CD4-positive, alpha-beta T cell (primary cell): ENCODE measurements at regions of chr2 and their contacts with region 1.

Region 1: GRCh38 chr2:65056215-65057053 is at the start of gene CEP68:
- DNase-seq: peak; percentile 90 to 98 (median 94)
- ATAC-seq: peak; percentile 89
- H3K4me3 ChIP-seq: peak within 1 kb of the TSS; percentile 87
- H3K4me3 Mint-ChIP-seq: peak within 1 kb of the TSS; percentile 98
- H3K27ac ChIP-seq: peak within 1 kb of the TSS; percentile 45 to 66
- H3K27ac Mint-ChIP-seq: peak within 1 kb of the TSS; percentile 96
- H3K4me1 ChIP-seq: peaks cover 66% of the 10 kb centered on the region
- H3K4me1 Mint-ChIP-seq: peaks cover 69% of the 10 kb centered on the region
- H3K27me3 ChIP-seq: no peaks in the 10 kb centered on the region
- H3K27me3 Mint-ChIP-seq: no peaks in the 10 kb centered on the region
- CTCF ChIP-seq: no peak
- total RNA-seq, gene CEP68: 19.4 to 20.1 TPM

Region 2: GRCh38 chr2:64750817-64751285 is 305.6 kb before region 1 on chr2:
- CTCF ChIA-PET with region 1: no interaction called
- POLR2A ChIA-PET with region 1: interaction called, 15 read pairs
- intact Hi-C with region 1: loop called in 1 of 2 experiments (anchors 5 kb)
- DNase-seq: peak; percentile 92 to 100 (median 96)
- ATAC-seq: peak; percentile 83
- H3K4me3 ChIP-seq: peak overlapping the region; percentile 96
- H3K4me3 Mint-ChIP-seq: peak overlapping the region; percentile 95
- H3K27ac ChIP-seq: peak overlapping the region; percentile 81 to 91
- H3K27ac Mint-ChIP-seq: peak overlapping the region; percentile 92
- H3K4me1 ChIP-seq: peaks cover 16% of the 10 kb centered on the region
- H3K4me1 Mint-ChIP-seq: peaks cover 34% of the 10 kb centered on the region
- H3K27me3 ChIP-seq: no peaks in the 10 kb centered on the region
- H3K27me3 Mint-ChIP-seq: no peaks in the 10 kb centered on the region
- CTCF ChIP-seq: no peak

Region 3: GRCh38 chr2:64988420-64989125 is 67.9 kb before region 1 on chr2:
- CTCF ChIA-PET with region 1: no interaction called
- POLR2A ChIA-PET with region 1: interaction called, 30 read pairs
- intact Hi-C with region 1: loop called in 1 of 2 experiments (anchors 1 kb)
- DNase-seq: peak in 13 of 14 experiments; percentile 7 to 88 (median 43)
- ATAC-seq: peak; percentile 48
- H3K4me3 ChIP-seq: peak overlapping the region; percentile 62
- H3K4me3 Mint-ChIP-seq: peak overlapping the region; percentile 84
- H3K27ac ChIP-seq: no peak overlapping the region
- H3K27ac Mint-ChIP-seq: peak overlapping the region; percentile 6
- H3K4me1 ChIP-seq: peaks cover 25% of the 10 kb centered on the region
- H3K4me1 Mint-ChIP-seq: peaks cover 29% of the 10 kb centered on the region
- H3K27me3 ChIP-seq: no peaks in the 10 kb centered on the region
- H3K27me3 Mint-ChIP-seq: peaks cover 4% of the 10 kb centered on the region
- CTCF ChIP-seq: no peak

Region 4: DNA sequence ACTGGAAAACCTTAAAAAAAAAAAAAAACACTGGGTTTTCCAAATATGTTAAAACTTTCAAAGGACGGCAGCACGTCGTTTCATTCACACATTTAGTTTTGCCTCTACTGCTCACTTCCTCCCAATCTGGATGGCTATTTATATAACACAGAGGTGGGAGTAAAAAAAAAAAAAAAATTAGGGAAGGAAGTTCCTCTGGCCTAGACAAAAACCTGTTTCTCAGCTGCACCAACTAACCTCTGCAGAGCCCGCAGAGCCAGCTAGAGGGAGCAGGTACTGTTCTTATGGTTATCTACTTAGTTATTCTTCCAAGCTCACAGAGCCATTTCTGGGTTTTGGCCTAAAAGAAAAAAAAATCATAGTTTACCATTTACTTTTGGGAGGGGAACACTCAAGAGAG is 39.1 kb before region 1 on chr2:
- CTCF ChIA-PET with region 1: no interaction called
- POLR2A ChIA-PET with region 1: no interaction called
- intact Hi-C with region 1: no loop called
- DNase-seq: peak in 4 of 14 experiments; percentile 5 to 44 (median 28)
- ATAC-seq: no peak
- H3K4me3 ChIP-seq: no peak overlapping the region
- H3K4me3 Mint-ChIP-seq: no peak overlapping the region
- H3K27ac ChIP-seq: no peak overlapping the region
- H3K27ac Mint-ChIP-seq: no peak overlapping the region
- H3K4me1 ChIP-seq: no peaks in the 10 kb centered on the region
- H3K4me1 Mint-ChIP-seq: peaks cover 11% of the 10 kb centered on the region
- H3K27me3 ChIP-seq: no peaks in the 10 kb centered on the region
- H3K27me3 Mint-ChIP-seq: no peaks in the 10 kb centered on the region
- CTCF ChIP-seq: no peak

Region 5: GRCh38 chr2:65040400-65041261 is 15.8 kb before region 1 on chr2:
- CTCF ChIA-PET with region 1: interaction called, 3 read pairs
- POLR2A ChIA-PET with region 1: interaction called, 14 read pairs
- intact Hi-C with region 1: no loop called
- DNase-seq: peak; percentile 60 to 88 (median 69)
- ATAC-seq: peak; percentile 100
- H3K4me3 ChIP-seq: no peak overlapping the region
- H3K4me3 Mint-ChIP-seq: peak overlapping the region; percentile 34
- H3K27ac ChIP-seq: no peak overlapping the region
- H3K27ac Mint-ChIP-seq: no peak overlapping the region
- H3K4me1 ChIP-seq: peaks cover 5% of the 10 kb centered on the region
- H3K4me1 Mint-ChIP-seq: peaks cover 13% of the 10 kb centered on the region
- H3K27me3 ChIP-seq: no peaks in the 10 kb centered on the region
- H3K27me3 Mint-ChIP-seq: no peaks in the 10 kb centered on the region
- CTCF ChIP-seq: peak; percentile 95

Region 6: DNA sequence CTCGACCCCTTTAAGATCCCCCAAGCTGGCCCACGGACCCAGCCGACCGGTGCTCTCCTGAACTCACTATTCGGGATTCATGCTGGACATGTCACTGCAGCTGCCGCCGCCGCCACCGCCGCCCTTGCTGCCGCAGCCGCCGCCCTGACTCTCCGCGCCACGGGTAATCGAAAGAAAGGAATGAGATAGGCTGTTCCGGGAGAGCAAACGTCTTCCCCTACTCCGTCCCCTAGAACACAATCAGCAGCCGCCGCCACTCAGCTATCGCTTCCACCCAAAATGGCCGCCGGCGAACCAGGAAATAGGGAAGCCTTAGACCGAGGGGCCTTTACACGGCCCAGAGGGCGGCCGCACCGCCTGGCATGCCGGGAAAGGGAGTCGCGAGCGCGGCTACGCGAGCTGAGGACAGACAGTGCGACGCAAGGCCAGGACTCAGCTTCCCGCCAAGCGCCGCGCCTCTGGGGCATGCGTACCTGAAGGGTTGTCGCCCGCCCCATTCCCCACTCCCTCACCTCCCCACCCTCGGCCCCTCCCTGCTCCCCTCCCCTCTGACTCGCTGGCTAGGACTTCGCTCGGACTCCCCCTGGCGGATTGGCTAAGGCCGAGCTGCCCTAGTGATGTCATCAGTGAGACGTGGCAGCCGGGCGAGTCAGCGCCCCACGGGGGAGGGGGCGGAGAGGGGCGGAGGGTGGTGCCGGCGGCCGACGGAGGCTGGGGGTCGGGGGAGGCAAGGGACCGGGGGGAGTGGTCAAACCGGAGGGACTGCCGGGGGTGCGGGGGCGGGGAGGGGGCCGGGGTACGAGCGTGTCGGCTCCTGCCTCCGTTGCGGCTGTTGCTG is 73.6 kb after region 1 on chr2 and contains the start of gene RAB1A:
- CTCF ChIA-PET with region 1: interaction called, 15 read pairs
- POLR2A ChIA-PET with region 1: interaction called, 119 read pairs
- intact Hi-C with region 1: loop called (anchors 2 kb)
- DNase-seq: peak; percentile 98 to 100 (median 99)
- ATAC-seq: peak; percentile 89
- H3K4me3 ChIP-seq: peak within 1 kb of the TSS; percentile 80
- H3K4me3 Mint-ChIP-seq: peak within 1 kb of the TSS; percentile 100
- H3K27ac ChIP-seq: peak within 1 kb of the TSS; percentile 95
- H3K27ac Mint-ChIP-seq: peak within 1 kb of the TSS; percentile 98
- H3K4me1 ChIP-seq: peaks cover 30% of the 10 kb centered on the region
- H3K4me1 Mint-ChIP-seq: peaks cover 45% of the 10 kb centered on the region
- H3K27me3 ChIP-seq: no peaks in the 10 kb centered on the region
- H3K27me3 Mint-ChIP-seq: no peaks in the 10 kb centered on the region
- CTCF ChIP-seq: peak; percentile 37
- total RNA-seq, gene RAB1A: 85.3 to 87.6 TPM

Region 7: DNA sequence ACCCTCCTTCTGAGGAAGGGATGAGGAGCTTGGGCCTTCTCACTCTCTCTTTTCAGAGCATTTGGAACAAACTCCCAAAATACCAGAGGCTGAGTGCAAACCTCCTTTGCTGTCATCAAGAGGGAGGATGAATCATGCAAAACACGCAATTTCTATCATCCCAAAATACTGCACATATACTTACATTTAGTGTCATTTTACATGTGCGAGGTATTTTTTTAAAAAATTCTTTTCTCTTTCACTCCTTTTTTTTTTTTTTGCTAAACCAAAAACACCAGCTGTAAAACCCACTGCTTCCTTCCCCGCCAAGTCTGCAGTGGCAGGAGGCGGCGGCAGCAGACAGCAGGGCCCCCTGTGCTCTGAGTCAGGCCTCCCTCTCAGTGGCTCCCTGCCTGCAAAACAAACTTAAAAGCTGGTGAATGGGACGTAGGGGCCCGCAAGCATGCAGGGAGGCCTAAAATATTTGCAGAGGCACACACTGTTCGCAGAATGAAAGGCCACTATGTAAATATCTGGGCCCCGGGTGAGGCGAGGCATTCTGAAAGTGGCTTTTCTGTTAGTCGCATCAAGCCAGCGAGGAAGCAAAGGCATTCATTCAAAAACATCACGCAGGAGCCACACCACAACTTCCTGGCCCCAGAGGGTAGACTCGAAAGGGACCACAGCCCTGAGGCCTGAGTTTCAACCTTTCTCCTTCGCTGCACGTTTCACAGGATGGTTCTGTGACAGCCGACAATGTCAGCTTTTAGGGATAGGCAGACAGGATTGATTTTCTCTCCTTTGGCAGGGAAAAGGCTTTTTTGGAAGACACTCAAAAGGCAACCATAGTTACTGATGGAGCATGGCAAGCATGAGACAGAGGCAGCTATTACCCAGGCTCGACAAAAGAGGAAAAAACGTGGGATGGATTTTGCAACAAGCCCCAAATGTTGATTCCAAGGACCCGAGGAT is 244.6 kb after region 1 on chr2:
- CTCF ChIA-PET with region 1: no interaction called
- POLR2A ChIA-PET with region 1: no interaction called
- intact Hi-C with region 1: no loop called
- DNase-seq: peak; percentile 40 to 80 (median 70)
- ATAC-seq: peak; percentile 93
- H3K4me3 ChIP-seq: peak overlapping the region; percentile 49
- H3K4me3 Mint-ChIP-seq: peak overlapping the region; percentile 85
- H3K27ac ChIP-seq: peak overlapping the region; percentile 21 to 52
- H3K27ac Mint-ChIP-seq: peak overlapping the region; percentile 90
- H3K4me1 ChIP-seq: peaks cover 27% of the 10 kb centered on the region
- H3K4me1 Mint-ChIP-seq: peaks cover 44% of the 10 kb centered on the region
- H3K27me3 ChIP-seq: no peaks in the 10 kb centered on the region
- H3K27me3 Mint-ChIP-seq: no peaks in the 10 kb centered on the region
- CTCF ChIP-seq: no peak